Aorta (tissue), 5 donors: ENCODE measurements at regions of chr12 and their contacts with region 1.

Region 1: DNA sequence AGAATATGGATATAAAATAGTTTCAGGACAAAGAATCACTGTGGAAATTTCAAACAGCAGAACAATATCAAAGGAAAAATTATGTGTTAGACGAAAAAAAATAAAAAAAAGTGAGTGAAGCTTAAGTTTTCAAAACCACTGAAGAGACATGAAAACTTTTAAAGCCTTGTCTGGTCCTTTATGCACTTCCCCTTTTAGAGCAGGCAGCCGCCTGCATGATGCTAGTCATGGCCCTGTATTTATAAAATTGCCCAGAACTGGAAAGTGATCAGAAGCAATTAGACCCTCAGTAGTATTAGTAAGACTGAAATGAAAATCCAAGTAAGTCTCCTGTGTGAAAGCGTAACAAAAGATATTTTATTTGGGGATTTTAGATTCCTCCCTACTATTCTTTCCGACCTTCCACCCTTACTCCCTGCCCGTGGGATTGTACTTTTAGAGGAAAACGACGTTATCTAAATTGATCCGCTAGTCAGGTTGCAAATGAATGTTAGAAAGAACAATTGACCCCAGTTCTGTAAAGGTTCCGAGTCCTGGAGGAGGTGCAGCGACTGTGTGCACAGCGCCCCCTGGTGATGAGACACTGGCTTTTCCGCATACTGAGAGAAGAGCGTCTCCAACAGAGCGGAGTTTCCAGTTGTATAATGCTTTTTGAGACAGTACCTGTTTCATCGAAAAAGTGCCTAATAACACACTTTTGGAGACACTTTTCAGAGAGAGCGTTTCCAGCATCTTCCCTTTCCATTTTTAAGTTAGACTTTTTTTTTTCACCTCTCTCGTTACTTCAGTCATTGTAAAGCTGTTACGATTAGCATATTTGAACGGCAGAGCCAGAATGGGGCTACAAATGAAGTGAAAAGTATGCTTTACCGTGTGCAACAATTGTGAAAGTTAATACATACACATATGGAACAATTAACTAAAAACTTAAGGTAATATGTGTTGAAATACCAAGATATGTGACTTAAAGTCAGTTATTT is 12.4 kb downstream of the MGST1 start:
- DNase-seq: peak; percentile 66 to 82
- ATAC-seq: peak; percentile 70
- H3K4me3 ChIP-seq: peak overlapping the region in 1 of 2 donors; percentile 3
- H3K27ac ChIP-seq: no peak overlapping the region
- H3K4me1 ChIP-seq: no peaks in the 10 kb centered on the region
- H3K27me3 ChIP-seq: no peaks in the 10 kb centered on the region

Region 2: GRCh38 chr12:15979096-15980092 is 380.4 kb before region 1 on chr12:
- intact Hi-C with region 1: loop called in 1 of 2 experiments (anchors 10 kb)
- DNase-seq: no peak
- ATAC-seq: no peak
- H3K4me3 ChIP-seq: no peak overlapping the region
- H3K27ac ChIP-seq: peak overlapping the region in 1 of 2 donors; percentile 95
- H3K4me1 ChIP-seq: peaks cover 3 to 4% of the 10 kb centered on the region in 2 donors
- H3K27me3 ChIP-seq: no peaks in the 10 kb centered on the region

Region 3: DNA sequence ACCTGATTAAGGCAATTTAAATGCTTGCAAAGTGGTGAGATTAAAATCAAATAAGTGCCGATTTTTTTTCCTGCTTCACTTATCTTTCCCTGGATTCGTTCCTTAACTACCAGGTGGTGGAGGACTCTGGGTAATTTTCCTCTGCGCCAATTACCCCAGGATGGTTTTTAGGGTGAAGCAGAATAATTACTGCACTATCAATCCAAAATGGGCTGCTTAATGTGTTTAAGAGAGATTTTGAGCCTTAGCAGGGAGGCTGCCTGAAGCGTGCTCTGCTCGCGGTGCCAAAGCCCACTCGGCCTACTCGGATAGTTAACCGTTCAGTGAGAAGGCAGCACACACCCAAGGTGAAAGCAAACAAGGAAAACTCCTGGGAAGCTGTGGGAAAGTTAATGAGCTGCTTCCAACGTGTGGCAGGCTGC is 521.1 kb after region 1 on chr12:
- intact Hi-C with region 1: no loop called
- DNase-seq: no peak
- ATAC-seq: no peak
- H3K4me3 ChIP-seq: no peak overlapping the region
- H3K27ac ChIP-seq: no peak overlapping the region
- H3K4me1 ChIP-seq: no peaks in the 10 kb centered on the region
- H3K27me3 ChIP-seq: no peaks in the 10 kb centered on the region